CD4-positive, alpha-beta T cell (primary cell): ENCODE measurements at regions of chr2 and their contacts with region 1.

Region 1: DNA sequence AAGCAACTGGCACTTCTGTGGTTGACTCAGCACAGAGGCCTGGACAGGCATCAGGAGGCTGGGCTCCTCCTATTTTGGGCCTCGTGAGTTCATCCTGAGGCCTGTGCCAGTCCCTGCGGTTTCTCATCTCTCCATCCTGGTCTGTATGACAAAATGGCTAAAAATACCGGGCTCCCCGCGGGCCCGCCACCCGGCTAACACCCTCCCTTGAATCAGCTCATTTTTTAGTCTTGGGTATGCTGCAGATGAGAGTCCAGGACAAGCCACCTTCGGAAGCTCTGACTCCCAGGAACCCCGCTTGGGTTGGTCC is 62.4 kb upstream of the YWHAQ start:
- DNase-seq: peak in 1 of 14 experiments; percentile 46
- ATAC-seq: no peak
- H3K4me3 ChIP-seq: no peak overlapping the region
- H3K4me3 Mint-ChIP-seq: no peak overlapping the region
- H3K27ac ChIP-seq: no peak overlapping the region
- H3K27ac Mint-ChIP-seq: no peak overlapping the region
- H3K4me1 ChIP-seq: peaks cover 29% of the 10 kb centered on the region
- H3K4me1 Mint-ChIP-seq: peaks cover 7% of the 10 kb centered on the region
- H3K27me3 ChIP-seq: no peaks in the 10 kb centered on the region
- H3K27me3 Mint-ChIP-seq: no peaks in the 10 kb centered on the region
- CTCF ChIP-seq: no peak

Region 2: GRCh38 chr2:9644603-9645002 is 48.6 kb before region 1 on chr2:
- CTCF ChIA-PET with region 1: interaction called, 4 read pairs
- POLR2A ChIA-PET with region 1: no interaction called
- intact Hi-C with region 1: loop called in 1 of 2 experiments (anchors 5 kb)
- DNase-seq: no peak
- ATAC-seq: no peak
- H3K4me3 ChIP-seq: no peak overlapping the region
- H3K4me3 Mint-ChIP-seq: no peak overlapping the region
- H3K27ac ChIP-seq: no peak overlapping the region
- H3K27ac Mint-ChIP-seq: no peak overlapping the region
- H3K4me1 ChIP-seq: peaks cover 15% of the 10 kb centered on the region
- H3K4me1 Mint-ChIP-seq: peaks cover 6% of the 10 kb centered on the region
- H3K27me3 ChIP-seq: no peaks in the 10 kb centered on the region
- H3K27me3 Mint-ChIP-seq: no peaks in the 10 kb centered on the region
- CTCF ChIP-seq: no peak

Region 3: GRCh38 chr2:9681427-9681817 is 11.7 kb before region 1 on chr2:
- CTCF ChIA-PET with region 1: no interaction called
- POLR2A ChIA-PET with region 1: no interaction called
- intact Hi-C with region 1: no loop called
- DNase-seq: peak in 9 of 14 experiments; percentile 10 to 81 (median 23)
- ATAC-seq: peak; percentile 84
- H3K4me3 ChIP-seq: no peak overlapping the region
- H3K4me3 Mint-ChIP-seq: peak overlapping the region; percentile 38
- H3K27ac ChIP-seq: no peak overlapping the region
- H3K27ac Mint-ChIP-seq: peak overlapping the region; percentile 53
- H3K4me1 ChIP-seq: peaks cover 21% of the 10 kb centered on the region
- H3K4me1 Mint-ChIP-seq: peaks cover 4% of the 10 kb centered on the region
- H3K27me3 ChIP-seq: no peaks in the 10 kb centered on the region
- H3K27me3 Mint-ChIP-seq: no peaks in the 10 kb centered on the region
- CTCF ChIP-seq: no peak